Activated naive CD4-positive, alpha-beta T cell treated with anti-CD3 and anti-CD28 coated beads for 36 hours (primary cell): ENCODE measurements at regions of chr1 and their contacts with region 1.

Region 1: DNA sequence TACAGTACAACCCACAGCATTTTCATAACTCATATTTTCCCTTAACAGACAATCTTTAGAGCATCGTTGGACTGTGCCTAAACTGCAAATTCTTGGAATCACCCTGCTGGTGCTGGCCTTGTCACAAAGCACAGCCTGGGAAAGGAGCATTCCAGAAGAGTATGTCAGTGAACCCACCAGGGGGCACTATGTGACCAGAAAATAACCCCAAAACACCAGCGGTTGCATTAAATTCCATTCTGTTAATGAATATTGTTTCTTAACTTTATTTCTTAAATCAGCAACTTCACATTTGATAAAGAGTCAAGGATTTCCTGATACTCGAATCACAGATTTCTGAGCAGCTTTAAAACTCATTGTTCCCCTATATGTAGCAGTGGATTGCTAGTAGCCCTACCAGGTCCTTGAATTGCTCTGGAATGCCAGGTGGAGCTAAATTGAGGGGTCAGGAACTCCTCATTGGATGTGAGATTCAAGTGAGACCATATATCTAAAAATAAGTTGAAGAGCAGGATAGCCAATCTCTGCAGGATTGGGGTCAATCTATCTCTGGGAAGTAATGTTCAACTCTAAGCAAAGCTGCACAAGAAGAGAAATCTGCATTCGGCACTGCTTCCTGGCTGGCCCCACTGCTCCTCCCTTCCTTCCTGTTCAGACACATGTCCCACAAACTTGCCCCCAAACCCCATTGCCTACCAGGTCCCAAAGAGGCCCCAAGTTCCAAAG is 12.7 kb upstream of the RAB4A start:
- DNase-seq: peak; percentile 75
- H3K4me3 Mint-ChIP-seq: no peak overlapping the region
- H3K27ac Mint-ChIP-seq: no peak overlapping the region
- H3K4me1 Mint-ChIP-seq: peaks cover 28% of the 10 kb centered on the region
- H3K27me3 Mint-ChIP-seq: no peaks in the 10 kb centered on the region

Region 2: GRCh38 chr1:228664399-228664914 is 593.7 kb before region 1 on chr1:
- CTCF ChIA-PET with region 1: interaction called, 13 read pairs
- intact Hi-C with region 1: loop called (anchors 1 kb)
- DNase-seq: peak; percentile 88
- H3K4me3 Mint-ChIP-seq: no peak overlapping the region
- H3K27ac Mint-ChIP-seq: no peak overlapping the region
- H3K4me1 Mint-ChIP-seq: no peaks in the 10 kb centered on the region
- H3K27me3 Mint-ChIP-seq: no peaks in the 10 kb centered on the region

Region 3: DNA sequence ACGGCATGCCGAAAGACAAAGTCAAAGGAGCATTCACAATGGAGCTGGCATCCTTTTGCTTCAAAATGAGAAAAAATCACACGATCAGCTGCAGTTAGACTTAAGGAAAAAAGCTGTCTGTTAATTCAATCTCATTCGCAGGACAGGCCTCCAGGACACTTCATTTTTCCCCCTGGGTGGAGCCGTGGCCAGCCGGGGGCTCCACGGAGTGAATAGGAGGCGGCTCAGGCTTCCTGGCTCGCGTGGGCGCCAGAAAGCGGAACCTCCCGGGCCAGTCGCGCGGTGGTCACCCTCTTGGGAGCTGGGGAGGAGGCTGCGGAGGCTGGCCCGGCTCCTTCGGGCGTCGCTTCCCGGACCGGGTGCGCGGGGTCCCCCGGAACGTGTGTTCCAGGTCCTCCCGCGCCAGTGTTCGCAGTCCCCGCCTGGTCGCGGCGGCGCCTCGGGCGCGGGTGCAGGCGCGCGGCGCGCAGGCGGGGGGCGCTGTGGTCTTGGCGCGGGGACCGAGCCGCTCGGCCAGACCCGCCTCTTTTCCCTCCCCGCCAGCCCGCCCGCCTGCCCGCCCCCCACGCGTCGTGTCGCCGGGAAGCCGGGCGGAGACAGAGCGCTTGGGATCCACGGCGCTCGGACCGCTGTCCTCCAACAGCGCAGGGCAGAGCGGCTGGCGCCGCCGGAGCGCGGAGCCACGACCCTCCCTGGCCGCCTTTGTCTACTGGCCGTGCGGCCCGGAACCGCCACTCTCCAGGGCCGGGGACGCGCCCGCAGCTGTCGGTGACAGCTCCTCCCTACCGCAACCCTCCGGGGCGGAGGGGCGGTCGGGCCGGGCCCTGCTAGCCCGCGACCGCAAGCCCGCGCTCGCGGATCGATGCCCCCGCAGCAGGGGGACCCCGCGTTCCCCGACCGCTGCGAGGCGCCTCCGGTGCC is 523.1 kb before region 1 on chr1 and contains the start of gene RHOU:
- CTCF ChIA-PET with region 1: no interaction called
- intact Hi-C with region 1: loop called (anchors 5 kb)
- DNase-seq: peak; percentile 64
- H3K4me3 Mint-ChIP-seq: peak within 1 kb of the TSS; percentile 75
- H3K27ac Mint-ChIP-seq: no peak within 1 kb of the TSS
- H3K4me1 Mint-ChIP-seq: peaks cover 3% of the 10 kb centered on the region
- H3K27me3 Mint-ChIP-seq: peaks cover 5% of the 10 kb centered on the region
- total RNA-seq, gene RHOU: 0.17 to 0.35 TPM

Region 4: DNA sequence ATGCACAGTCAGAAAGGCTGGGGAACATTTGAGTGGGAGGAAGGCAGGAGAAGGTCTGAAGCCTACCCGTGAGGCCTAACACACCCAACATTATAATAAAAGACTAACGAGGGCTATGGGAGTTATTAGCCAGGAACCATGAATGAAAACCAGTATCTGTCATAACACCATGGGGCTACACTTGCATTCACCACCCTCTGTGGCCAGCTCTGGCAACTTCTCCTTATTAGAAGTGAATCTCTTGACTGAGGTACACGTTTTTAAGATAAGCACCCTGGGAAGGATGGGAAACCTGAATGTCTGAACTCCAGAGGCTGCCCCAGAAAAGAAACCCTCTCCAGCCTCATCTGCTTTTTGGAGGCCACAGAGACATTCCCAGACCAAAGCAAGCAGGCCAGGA is 191.6 kb before region 1 on chr1:
- CTCF ChIA-PET with region 1: no interaction called
- intact Hi-C with region 1: no loop called
- DNase-seq: no peak
- H3K4me3 Mint-ChIP-seq: no peak overlapping the region
- H3K27ac Mint-ChIP-seq: no peak overlapping the region
- H3K4me1 Mint-ChIP-seq: peaks cover 10% of the 10 kb centered on the region
- H3K27me3 Mint-ChIP-seq: no peaks in the 10 kb centered on the region

Region 5: DNA sequence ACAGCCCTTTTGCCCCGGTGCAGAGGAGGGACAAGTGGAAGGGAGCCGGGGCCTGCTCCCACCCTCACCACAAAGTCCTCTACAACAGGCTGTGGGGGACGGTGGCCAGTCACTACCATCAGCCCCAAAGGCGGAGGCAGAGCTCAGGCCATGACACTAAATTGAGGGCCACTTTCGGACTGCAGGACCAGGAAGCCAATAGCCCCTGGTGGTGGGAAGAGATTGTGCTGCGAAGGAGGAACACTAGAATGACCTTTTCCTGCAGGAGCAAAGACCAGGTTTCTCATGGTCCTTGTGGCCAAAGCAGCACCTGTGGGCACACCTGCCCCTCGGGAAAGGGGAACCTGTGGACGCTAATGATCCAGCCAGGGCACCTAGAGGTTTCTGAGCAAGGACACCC is 145.4 kb after region 1 on chr1:
- CTCF ChIA-PET with region 1: no interaction called
- intact Hi-C with region 1: no loop called
- DNase-seq: no peak
- H3K4me3 Mint-ChIP-seq: no peak overlapping the region
- H3K27ac Mint-ChIP-seq: no peak overlapping the region
- H3K4me1 Mint-ChIP-seq: peaks cover 6% of the 10 kb centered on the region
- H3K27me3 Mint-ChIP-seq: peaks cover 39% of the 10 kb centered on the region

Region 6: DNA sequence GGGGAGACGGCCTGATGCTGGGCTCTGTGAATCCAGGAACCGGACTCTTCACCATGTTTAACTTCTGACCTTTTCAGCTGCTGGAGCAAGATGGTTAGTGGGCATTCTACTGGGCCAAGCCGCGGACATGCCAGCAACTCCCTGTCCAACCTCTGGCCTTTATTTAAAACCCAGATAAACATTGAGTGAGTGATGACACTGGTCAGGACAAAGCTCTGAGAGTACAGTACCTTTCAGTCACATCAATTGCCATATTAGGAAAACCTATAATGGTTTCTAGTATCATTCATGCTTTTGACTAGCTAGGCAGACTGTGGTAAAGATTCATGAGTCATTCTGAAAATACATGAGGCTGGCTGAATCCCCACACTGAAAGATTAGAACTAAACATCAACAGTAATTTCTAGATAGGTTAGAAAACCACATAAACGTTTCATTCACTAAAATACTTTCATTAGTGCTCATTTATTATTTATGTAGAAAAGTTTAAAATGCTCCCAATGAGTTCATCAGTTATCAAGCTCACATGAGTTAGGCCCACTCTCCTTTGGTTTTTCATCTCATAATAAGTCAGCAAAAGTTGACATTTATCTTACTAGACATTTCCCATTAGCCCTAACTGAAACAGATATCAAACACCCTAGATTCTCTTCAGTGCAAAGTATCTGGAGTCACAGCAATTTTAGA is 182.8 kb after region 1 on chr1:
- CTCF ChIA-PET with region 1: interaction called, 8 read pairs
- intact Hi-C with region 1: loop called (anchors 1 kb)
- DNase-seq: peak; percentile 44
- H3K4me3 Mint-ChIP-seq: no peak overlapping the region
- H3K27ac Mint-ChIP-seq: peak overlapping the region; percentile 68
- H3K4me1 Mint-ChIP-seq: peaks cover 28% of the 10 kb centered on the region
- H3K27me3 Mint-ChIP-seq: peaks cover 13% of the 10 kb centered on the region

Region 7: GRCh38 chr1:229514578-229515275 is 256.5 kb after region 1 on chr1:
- CTCF ChIA-PET with region 1: interaction called, 9 read pairs
- intact Hi-C with region 1: loop called (anchors 1 kb)
- DNase-seq: peak; percentile 75
- H3K4me3 Mint-ChIP-seq: no peak overlapping the region
- H3K27ac Mint-ChIP-seq: no peak overlapping the region
- H3K4me1 Mint-ChIP-seq: peaks cover 8% of the 10 kb centered on the region
- H3K27me3 Mint-ChIP-seq: no peaks in the 10 kb centered on the region

Region 8: DNA sequence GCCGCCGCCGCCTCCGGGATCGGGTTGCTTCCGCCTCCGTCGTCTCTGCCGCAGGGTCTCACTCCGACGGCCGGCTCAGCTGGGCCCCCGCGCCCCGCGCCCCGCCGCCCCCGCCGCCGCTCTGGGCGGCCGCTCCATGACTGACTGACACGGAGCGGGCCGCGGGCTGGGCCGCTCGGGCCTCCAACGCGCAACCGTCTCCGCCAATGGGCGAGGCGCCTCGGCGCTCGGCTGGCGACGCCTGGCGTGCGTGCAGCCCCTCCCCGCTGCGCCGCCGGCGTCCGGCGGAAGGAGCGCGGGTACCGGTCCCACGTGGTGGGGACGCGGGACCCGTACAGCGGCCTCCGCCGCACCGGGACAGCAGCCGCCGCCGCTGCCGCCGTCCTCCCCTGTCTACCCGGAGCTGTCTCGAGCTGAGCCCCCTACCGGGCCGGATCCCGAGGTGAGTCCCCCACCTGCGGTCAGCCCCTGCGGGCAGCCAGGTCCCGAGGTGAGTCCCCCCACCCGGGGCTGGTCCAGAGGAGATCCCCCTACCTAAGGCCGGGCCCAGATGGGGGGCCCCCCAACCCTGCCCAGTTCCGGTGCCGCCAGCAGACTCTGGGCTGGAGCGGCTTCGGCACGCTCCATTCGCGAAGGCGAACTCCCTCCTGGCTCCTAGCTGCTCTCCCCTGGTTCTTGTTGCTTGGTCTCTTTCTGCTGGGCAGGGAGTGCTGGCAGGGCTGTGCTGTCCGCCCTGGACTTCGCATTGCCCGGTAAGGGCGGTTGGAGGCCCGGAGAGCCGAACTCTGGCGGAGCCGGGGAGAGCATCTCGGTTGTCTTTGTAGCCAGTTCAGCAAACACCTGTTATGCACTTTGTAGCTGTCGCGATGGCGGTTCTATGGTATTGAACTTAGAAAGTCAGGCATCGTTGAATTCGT is 368.0 kb after region 1 on chr1 and contains the starts of genes TAF5L and URB2:
- CTCF ChIA-PET with region 1: no interaction called
- intact Hi-C with region 1: loop called (anchors 2 kb)
- DNase-seq: peak; percentile 85
- H3K4me3 Mint-ChIP-seq: peak within 1 kb of the TSS; percentile 99
- H3K27ac Mint-ChIP-seq: peak within 1 kb of the TSS; percentile 89
- H3K4me1 Mint-ChIP-seq: peaks cover 51% of the 10 kb centered on the region
- H3K27me3 Mint-ChIP-seq: no peaks in the 10 kb centered on the region
- total RNA-seq, gene TAF5L: 10.3 TPM
- total RNA-seq, gene URB2: 9.5 to 10.0 TPM

Region 9: GRCh38 chr1:230310381-230311163 is 1052.4 kb after region 1 on chr1:
- CTCF ChIA-PET with region 1: no interaction called
- intact Hi-C with region 1: loop called (anchors 1 kb)
- DNase-seq: peak; percentile 75
- H3K4me3 Mint-ChIP-seq: no peak overlapping the region
- H3K27ac Mint-ChIP-seq: no peak overlapping the region
- H3K4me1 Mint-ChIP-seq: peaks cover 10% of the 10 kb centered on the region
- H3K27me3 Mint-ChIP-seq: peaks cover 4% of the 10 kb centered on the region